ENCODE measurements at regions of chr6 and their contacts with region 1.

Region 1: DNA sequence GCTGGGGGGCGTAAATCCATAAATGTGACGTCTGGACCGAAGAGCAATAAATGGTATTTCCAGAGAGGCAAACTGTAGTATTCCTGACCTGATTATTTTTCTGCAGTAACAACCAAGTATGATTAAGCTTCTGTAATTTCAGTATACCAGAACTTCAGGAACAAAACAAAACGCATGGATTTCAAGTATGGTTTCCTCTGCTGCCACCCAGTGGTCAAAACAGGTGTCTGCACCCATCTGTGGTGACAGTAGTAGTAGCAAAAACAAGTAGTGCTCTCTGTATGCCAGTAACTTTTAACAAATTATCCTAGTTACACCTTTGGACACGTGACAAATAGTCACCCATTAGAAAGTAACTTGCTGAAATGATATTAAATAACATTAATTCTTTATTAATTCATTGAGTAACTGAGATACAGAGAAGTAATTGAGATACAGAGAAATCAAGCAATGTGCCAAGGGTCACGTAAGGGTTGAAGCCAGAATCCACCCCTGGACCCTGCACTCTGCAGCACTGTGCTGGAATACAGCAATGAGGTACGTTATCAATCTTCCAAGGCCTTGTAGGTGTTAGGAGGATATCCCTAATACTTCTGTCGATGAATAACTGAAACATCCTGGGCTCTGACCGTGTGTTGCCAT is 7.9 kb downstream of the CALHM4 start:
- DNase-seq: peak; percentile 58
- H3K4me3 ChIP-seq: no peak overlapping the region
- H3K27ac ChIP-seq: no peak overlapping the region
- H3K4me1 ChIP-seq: peaks cover 29% of the 10 kb centered on the region
- H3K27me3 ChIP-seq: no peaks in the 10 kb centered on the region
- CTCF ChIP-seq: peak; percentile 84 to 96

Region 2: DNA sequence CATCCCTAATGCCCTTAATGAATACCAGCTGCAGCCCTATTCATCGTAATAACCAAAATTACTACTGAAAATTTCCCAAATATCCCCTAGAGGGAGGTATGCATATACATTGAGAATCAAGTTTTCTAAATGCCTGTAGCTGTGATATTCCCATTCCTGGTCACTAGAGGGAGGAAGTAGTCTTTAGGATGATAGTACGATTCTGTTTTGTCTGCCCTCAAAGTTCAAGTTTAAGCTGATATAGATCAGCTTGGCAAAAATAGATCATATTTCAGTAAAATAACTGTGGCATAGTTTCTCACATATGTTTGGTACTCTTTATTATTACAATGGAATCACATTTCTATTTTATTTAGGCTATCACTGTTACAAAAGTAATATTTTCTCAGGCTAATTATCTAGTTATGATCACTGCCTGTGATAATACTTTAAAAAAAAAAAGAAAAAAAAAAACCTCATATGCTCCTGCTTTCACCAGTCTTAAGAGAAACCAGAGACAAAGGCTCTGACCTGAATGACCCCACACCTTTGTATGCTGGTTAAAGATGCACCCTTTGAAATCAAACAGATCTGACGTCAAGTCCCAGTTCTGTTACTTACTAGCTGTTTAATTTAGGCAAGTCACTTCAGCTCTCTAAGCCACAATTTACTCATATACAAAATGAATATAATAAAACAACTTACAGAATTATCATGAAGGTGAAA is 292.8 kb before region 1 on chr6:
- CTCF ChIA-PET with region 1: interaction called, 3 read pairs
- dilution Hi-C with region 1: no loop called
- in situ Hi-C with region 1: loop called in 1 of 2 experiments (anchors 10 kb)
- intact Hi-C with region 1: loop called (anchors 1 kb)
- DNase-seq: peak; percentile 68
- H3K4me3 ChIP-seq: no peak overlapping the region
- H3K27ac ChIP-seq: no peak overlapping the region
- H3K4me1 ChIP-seq: peaks cover 33% of the 10 kb centered on the region
- H3K27me3 ChIP-seq: no peaks in the 10 kb centered on the region
- CTCF ChIP-seq: peak; percentile 93 to 98

Region 3: GRCh38 chr6:116518621-116519368 is 42.7 kb before region 1 on chr6:
- CTCF ChIA-PET with region 1: no interaction called
- dilution Hi-C with region 1: no loop called
- in situ Hi-C with region 1: no loop called
- intact Hi-C with region 1: no loop called
- DNase-seq: no peak
- H3K4me3 ChIP-seq: no peak overlapping the region
- H3K27ac ChIP-seq: no peak overlapping the region
- H3K4me1 ChIP-seq: peaks cover 4% of the 10 kb centered on the region
- H3K27me3 ChIP-seq: no peaks in the 10 kb centered on the region
- CTCF ChIP-seq: no peak

Measured in mammary epithelial cell (primary cell).